Heart left ventricle (tissue), 16 donors: ENCODE measurements at regions of chr19 and their contacts with region 1.

Region 1: DNA sequence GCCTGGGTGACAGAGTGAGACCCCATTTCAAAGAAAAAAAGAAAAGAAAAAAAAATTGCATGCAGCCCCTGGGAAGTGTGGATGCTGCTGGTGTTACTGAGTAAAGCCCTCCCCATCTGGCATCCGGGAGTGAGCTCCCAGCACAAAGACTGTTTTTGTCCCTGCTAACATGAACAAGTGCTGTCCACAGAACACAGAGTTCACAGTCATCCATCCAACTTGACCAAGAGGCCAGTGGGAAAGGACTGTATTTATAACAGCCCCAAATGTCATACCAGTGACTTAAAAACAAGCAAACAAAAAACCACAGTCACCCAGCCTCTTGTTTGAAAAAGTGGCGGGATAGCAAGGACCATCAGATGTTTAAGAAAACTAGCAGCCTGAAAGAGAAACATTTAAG is 10.8 kb downstream of the FBXO17 start:
- DNase-seq: no peak
- ATAC-seq: no peak
- H3K4me3 ChIP-seq: no peak overlapping the region
- H3K27ac ChIP-seq: no peak overlapping the region
- H3K4me1 ChIP-seq: peaks cover 0 to 9% (median 0%) of the 10 kb centered on the region in 12 donors
- H3K27me3 ChIP-seq: no peaks in the 10 kb centered on the region
- CTCF ChIP-seq: no peak
- POLR2A ChIP-seq: no peak

Region 2: GRCh38 chr19:38739440-38740256 is 225.1 kb before region 1 on chr19:
- intact Hi-C with region 1: no loop called
- DNase-seq: peak in 1 of 5 donors; percentile 27
- ATAC-seq: no peak
- H3K4me3 ChIP-seq: no peak overlapping the region
- H3K27ac ChIP-seq: no peak overlapping the region
- H3K4me1 ChIP-seq: peaks cover 0 to 18% (median 6%) of the 10 kb centered on the region in 12 donors
- H3K27me3 ChIP-seq: no peaks in the 10 kb centered on the region
- CTCF ChIP-seq: no peak
- POLR2A ChIP-seq: no peak

Region 3: GRCh38 chr19:38792250-38793111 is 172.3 kb before region 1 on chr19:
- intact Hi-C with region 1: no loop called
- DNase-seq: peak in 4 of 5 donors; percentile 48 to 82 (median 60)
- ATAC-seq: peak; percentile 18 to 63 (median 35)
- H3K4me3 ChIP-seq: peak overlapping the region in 10 of 12 donors; percentile 25 to 50 (median 39)
- H3K27ac ChIP-seq: peak overlapping the region in 3 of 12 donors; percentile 34 to 51 (median 43)
- H3K4me1 ChIP-seq: peaks cover 0 to 5% (median 0%) of the 10 kb centered on the region in 12 donors
- H3K27me3 ChIP-seq: no peaks in the 10 kb centered on the region
- CTCF ChIP-seq: peak in 10 of 12 donors; percentile 6 to 52 (median 33)
- POLR2A ChIP-seq: no peak

Region 4: GRCh38 chr19:39110263-39110967 is 145.7 kb after region 1 on chr19:
- intact Hi-C with region 1: loop called in 1 of 10 experiments (anchors 5 kb)
- DNase-seq: peak in 1 of 5 donors; percentile 39
- ATAC-seq: peak in 3 of 4 donors; percentile 62 to 71 (median 69)
- H3K4me3 ChIP-seq: no peak overlapping the region
- H3K27ac ChIP-seq: no peak overlapping the region
- H3K4me1 ChIP-seq: no peaks in the 10 kb centered on the region
- H3K27me3 ChIP-seq: peaks cover 0 to 61% (median 15%) of the 10 kb centered on the region in 9 donors
- CTCF ChIP-seq: peak; percentile 54 to 79 (median 72)
- POLR2A ChIP-seq: no peak

Region 5: GRCh38 chr19:39319892-39320248 is 355.1 kb after region 1 on chr19:
- intact Hi-C with region 1: loop called in 6 of 10 experiments (anchors 5 to 10 kb)
- DNase-seq: no peak
- ATAC-seq: no peak
- H3K4me3 ChIP-seq: peak overlapping the region in 4 of 12 donors; percentile 39 to 61 (median 56)
- H3K27ac ChIP-seq: no peak overlapping the region
- H3K4me1 ChIP-seq: peaks cover 0 to 13% (median 0%) of the 10 kb centered on the region in 12 donors
- H3K27me3 ChIP-seq: peaks cover 0 to 15% (median 0%) of the 10 kb centered on the region in 9 donors
- CTCF ChIP-seq: no peak
- POLR2A ChIP-seq: no peak